H1 (cell line): ENCODE measurements at regions of chr16 and their contacts with region 1.

Region 1: GRCh38 chr16:20849587-20850390 is 43.5 kb downstream of the REXO5 start:
- DNase-seq: peak in 1 of 2 experiments; percentile 91
- H3K4me3 ChIP-seq: no peak overlapping the region
- H3K27ac ChIP-seq: no peak overlapping the region
- H3K4me1 ChIP-seq: peaks cover 0 to 2% (median 0%) of the 10 kb centered on the region in 4 experiments; a peak in 1 of 7 replicates
- H3K27me3 ChIP-seq: no peaks in the 10 kb centered on the region
- CTCF ChIP-seq: peak; percentile 69 to 96 (median 86)
- EP300 ChIP-seq: no peak
- POLR2A ChIP-seq: no peak
- RAD21 ChIP-seq: peak; percentile 97 to 98

Region 2: GRCh38 chr16:20866145-20866772 is 16.5 kb after region 1 on chr16:
- CTCF ChIA-PET with region 1: interaction called, 29 read pairs
- POLR2A ChIA-PET with region 1: no interaction called
- DNase-seq: no peak
- H3K4me3 ChIP-seq: no peak overlapping the region
- H3K27ac ChIP-seq: peak overlapping the region; percentile 1; the same call in 1 of the 2 replicates
- H3K4me1 ChIP-seq: peaks cover 0 to 6% (median 2%) of the 10 kb centered on the region in 4 experiments; a peak in 4 of 7 replicates
- H3K27me3 ChIP-seq: no peaks in the 10 kb centered on the region
- CTCF ChIP-seq: no peak
- EP300 ChIP-seq: no peak
- POLR2A ChIP-seq: no peak
- RAD21 ChIP-seq: no peak

Region 3: DNA sequence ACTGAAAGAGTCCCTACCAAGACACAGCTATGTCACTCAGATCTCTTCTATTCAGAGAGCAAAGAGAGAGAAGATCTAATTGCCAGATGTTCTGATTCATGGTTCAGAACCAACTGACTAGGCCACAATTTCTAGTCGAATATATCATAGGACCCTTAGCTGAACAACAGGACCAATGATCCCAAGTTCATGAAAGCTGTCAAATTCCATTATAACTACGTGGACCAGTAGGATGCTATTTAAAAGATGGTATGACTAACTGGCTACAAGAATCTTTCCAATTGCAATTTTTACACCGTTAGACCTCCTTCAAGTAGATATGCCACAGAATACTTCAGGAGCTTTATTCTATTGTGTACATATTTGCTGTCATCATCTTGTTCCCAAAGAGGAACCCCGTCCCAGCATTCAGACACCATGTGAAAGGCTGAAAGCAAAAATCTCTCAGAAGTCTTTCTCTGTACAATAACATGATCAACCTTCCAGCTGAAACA is 24.3 kb after region 1 on chr16:
- CTCF ChIA-PET with region 1: interaction called, 29 read pairs
- POLR2A ChIA-PET with region 1: interaction called, 3 read pairs
- DNase-seq: no peak
- H3K4me3 ChIP-seq: no peak overlapping the region
- H3K27ac ChIP-seq: no peak overlapping the region
- H3K4me1 ChIP-seq: peaks cover 0 to 8% (median under 1%) of the 10 kb centered on the region in 4 experiments; a peak in 2 of 7 replicates
- H3K27me3 ChIP-seq: no peaks in the 10 kb centered on the region
- CTCF ChIP-seq: no peak
- EP300 ChIP-seq: no peak
- POLR2A ChIP-seq: no peak
- RAD21 ChIP-seq: no peak

Region 4: GRCh38 chr16:21001262-21001661 is 151.5 kb after region 1 on chr16:
- CTCF ChIA-PET with region 1: interaction called, 25 read pairs
- POLR2A ChIA-PET with region 1: interaction called, 3 read pairs
- DNase-seq: peak in 1 of 2 experiments; percentile 54
- H3K4me3 ChIP-seq: no peak overlapping the region
- H3K27ac ChIP-seq: no peak overlapping the region
- H3K4me1 ChIP-seq: no peaks in the 10 kb centered on the region
- H3K27me3 ChIP-seq: no peaks in the 10 kb centered on the region
- CTCF ChIP-seq: peak; percentile 32 to 83 (median 65)
- EP300 ChIP-seq: no peak
- POLR2A ChIP-seq: no peak
- RAD21 ChIP-seq: peak; percentile 59 to 71

Region 5: DNA sequence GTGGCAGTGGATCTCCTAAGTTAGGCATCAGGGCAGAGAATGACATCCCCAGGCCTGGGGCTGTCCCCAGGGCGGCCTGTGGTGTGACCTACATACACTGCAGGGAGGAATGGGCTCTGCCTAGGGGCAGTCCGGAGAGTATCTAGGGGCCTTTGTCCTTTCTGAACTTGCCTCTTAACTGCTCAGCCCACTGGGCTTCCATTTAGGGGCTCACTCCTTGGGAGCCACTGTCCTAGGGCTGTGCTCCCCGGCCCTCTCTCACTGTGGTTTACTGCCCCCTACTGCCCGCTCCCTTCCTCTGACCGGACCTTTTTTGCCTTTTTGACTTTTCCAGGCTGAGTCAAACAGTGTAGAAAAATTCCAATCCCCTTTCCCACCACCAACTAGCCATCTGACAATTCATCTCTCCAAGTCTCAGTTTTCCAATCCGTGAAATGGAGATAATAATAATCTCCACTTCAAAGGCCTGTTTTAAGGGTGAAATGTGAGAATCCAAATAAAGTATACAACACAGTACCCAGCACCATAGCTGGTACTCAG is 234.0 kb after region 1 on chr16:
- CTCF ChIA-PET with region 1: interaction called, 125 read pairs
- POLR2A ChIA-PET with region 1: interaction called, 3 read pairs
- DNase-seq: peak; percentile 47 to 90
- H3K4me3 ChIP-seq: no peak overlapping the region
- H3K27ac ChIP-seq: no peak overlapping the region
- H3K4me1 ChIP-seq: no peaks in the 10 kb centered on the region
- H3K27me3 ChIP-seq: no peaks in the 10 kb centered on the region
- CTCF ChIP-seq: peak; percentile 76 to 83 (median 83)
- EP300 ChIP-seq: 0 out of 3 replicates have a peak, but pooled peaks of 1 of the 2 experiments have one; percentile 5
- POLR2A ChIP-seq: no peak
- RAD21 ChIP-seq: peak; percentile 95 to 96

Region 6: GRCh38 chr16:21101631-21102420 is 252.0 kb after region 1 on chr16:
- CTCF ChIA-PET with region 1: interaction called, 13 read pairs
- POLR2A ChIA-PET with region 1: no interaction called
- DNase-seq: no peak
- H3K4me3 ChIP-seq: no peak overlapping the region
- H3K27ac ChIP-seq: no peak overlapping the region
- H3K4me1 ChIP-seq: peaks cover 0 to 7% (median 2%) of the 10 kb centered on the region in 4 experiments; a peak in 3 of 7 replicates
- H3K27me3 ChIP-seq: no peaks in the 10 kb centered on the region; a peak in 1 of 7 replicates
- CTCF ChIP-seq: peak; percentile 27 to 41 (median 32)
- EP300 ChIP-seq: no peak
- POLR2A ChIP-seq: no peak
- RAD21 ChIP-seq: peak; percentile 42 to 61

Region 7: GRCh38 chr16:21126518-21126917 is 276.7 kb after region 1 on chr16:
- CTCF ChIA-PET with region 1: interaction called, 11 read pairs
- POLR2A ChIA-PET with region 1: no interaction called
- DNase-seq: no peak
- H3K4me3 ChIP-seq: no peak overlapping the region
- H3K27ac ChIP-seq: no peak overlapping the region
- H3K4me1 ChIP-seq: peaks cover 0 to 7% (median 3%) of the 10 kb centered on the region in 4 experiments; a peak in 6 of 7 replicates
- H3K27me3 ChIP-seq: no peaks in the 10 kb centered on the region
- CTCF ChIP-seq: no peak
- EP300 ChIP-seq: no peak
- POLR2A ChIP-seq: no peak
- RAD21 ChIP-seq: no peak